Dorsolateral prefrontal cortex (tissue), 120 donors: ENCODE measurements at regions of chr1 and their contacts with region 1.

Region 1: DNA sequence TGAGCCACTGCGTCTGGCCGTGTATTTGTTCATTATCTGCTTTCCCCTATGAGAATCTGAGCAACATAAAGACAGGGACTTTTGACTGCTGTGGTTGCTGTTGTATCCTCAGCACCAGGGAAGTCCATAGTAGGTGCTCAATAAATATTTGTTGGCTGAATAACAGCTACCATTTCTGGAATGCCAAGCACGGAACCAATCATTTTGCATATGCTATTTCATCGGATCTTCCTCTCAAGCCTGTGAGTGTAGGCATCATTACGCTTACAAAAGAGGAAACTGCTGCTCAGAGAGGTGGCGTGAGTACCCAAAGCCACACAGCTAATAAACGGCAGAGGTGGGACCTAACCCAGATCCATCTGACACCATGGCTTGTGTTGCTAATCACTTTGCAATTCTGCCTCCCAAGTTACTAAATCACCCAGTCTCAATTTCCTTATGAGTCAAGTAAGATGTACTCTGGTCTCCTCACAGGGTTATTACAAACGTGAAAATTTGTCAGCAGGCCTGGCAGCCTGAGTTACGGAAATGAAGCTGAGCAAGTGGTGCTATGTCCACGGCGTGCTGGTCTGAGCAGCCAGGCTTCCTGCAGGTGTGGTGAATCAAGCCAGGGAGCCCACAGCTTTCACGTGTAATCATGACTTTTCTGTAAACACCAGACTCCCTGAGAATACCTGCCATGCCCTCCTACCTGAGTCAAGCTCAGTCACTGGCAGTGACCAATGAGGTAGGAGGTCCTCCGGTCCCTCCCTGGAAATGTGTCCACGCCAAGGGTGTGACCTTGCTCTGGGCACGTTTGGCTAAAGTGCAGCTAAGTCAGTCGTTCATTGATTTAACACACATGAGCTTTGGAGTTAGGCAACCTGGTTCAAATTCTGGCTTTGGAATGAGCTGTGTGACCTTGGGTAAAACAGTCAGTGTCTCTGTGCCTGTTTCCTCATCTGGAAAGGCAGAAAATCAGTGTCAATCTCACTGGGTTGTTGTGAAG is 4.8 kb upstream of the RHCE start:
- DNase-seq: no peak
- H3K4me3 ChIP-seq: no peak overlapping the region
- H3K27ac ChIP-seq: no peak overlapping the region
- H3K27me3 ChIP-seq: no peaks in the 10 kb centered on the region
- CTCF ChIP-seq: no peak

Region 2: DNA sequence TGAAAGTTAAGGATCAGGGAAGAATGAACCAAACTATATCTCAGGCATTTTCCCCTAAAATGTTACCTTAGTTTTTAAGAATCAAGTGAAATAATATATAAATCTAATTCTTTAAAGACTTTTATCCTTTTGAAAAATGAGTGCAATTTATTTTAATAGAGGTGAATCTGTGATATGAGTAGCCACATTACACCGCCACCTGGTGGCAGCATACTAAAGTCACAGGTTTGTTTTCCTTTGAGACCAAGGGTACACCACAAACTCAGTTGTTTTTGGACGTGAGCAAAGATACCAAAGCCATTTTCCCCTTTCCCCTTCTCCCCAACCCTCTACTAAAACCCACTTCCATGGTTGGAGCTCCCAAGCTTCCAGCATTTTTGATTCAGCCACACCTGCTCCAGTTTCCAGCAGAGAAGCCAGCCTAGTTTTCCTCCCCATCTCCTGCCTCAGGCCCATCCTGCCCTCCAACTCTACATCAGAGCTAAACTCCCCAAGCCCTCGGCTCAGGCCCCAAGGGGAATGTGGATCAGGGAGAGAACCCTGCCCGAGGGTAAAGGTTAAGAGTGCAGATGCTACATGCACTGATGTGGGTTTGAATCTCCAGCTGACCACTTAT is 95.2 kb after region 1 on chr1:
- intact Hi-C with region 1: loop called in 1 of 2 experiments (anchors 10 kb)
- DNase-seq: peak in 8 of 10 donors; percentile 48 to 85 (median 76)
- H3K4me3 ChIP-seq: no peak overlapping the region
- H3K27ac ChIP-seq: peak overlapping the region in 26 of 59 donors; percentile 3 to 70 (median 38)
- H3K27me3 ChIP-seq: no peaks in the 10 kb centered on the region
- CTCF ChIP-seq: peak; percentile 67 to 97 (median 89)